GM18951 (cell line): ENCODE measurements at regions of chr5 and their contacts with region 1.

Region 1: GRCh38 chr5:67211926-67212325 is 15.3 kb upstream of the CD180 start:
- POLR2A ChIP-seq: no peak

Region 2: GRCh38 chr5:67161002-67161401 is 50.9 kb before region 1 on chr5:
- in situ Hi-C with region 1: loop called (anchors 5 kb)
- POLR2A ChIP-seq: no peak